ENCODE measurements at regions of chr12 and their contacts with region 1.

Region 1: GRCh38 chr12:66668311-66668710 is 10.6 kb downstream of the GRIP1 start:
- DNase-seq: no peak
- CTCF ChIP-seq: no peak

Region 2: GRCh38 chr12:66679461-66680084 is 11.3 kb after region 1 on chr12:
- CTCF ChIA-PET with region 1: interaction called, 10 read pairs
- POLR2A ChIA-PET with region 1: no interaction called
- DNase-seq: no peak
- CTCF ChIP-seq: no peak